ENCODE measurements at regions of chr7 and their contacts with region 1.

Region 1: DNA sequence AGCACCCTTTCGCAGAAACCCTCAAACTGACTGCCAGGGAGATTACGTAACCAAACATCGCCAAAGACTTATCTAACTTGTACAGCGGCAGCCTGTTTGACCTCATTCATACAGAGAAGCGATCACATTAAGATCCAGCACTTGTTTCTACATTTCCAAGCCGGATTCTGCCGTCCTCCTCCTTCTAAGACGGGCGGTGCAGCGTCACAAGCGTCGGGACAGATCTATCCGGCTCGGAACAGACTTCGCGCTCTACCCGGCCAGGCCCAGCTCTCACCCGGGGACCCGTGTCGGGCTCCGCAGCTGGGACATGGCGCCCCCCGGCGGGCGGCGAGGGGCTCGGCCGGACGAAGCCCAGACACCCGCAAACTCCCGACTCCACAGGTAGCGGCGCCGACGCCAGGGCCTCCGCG is 373 bp downstream of the H2AZ2 start:
- DNase-seq: peak; percentile 76 to 94
- H3K4me3 ChIP-seq: peak overlapping the region; percentile 69
- H3K27ac ChIP-seq: peak overlapping the region; percentile 51
- H3K4me1 ChIP-seq: peaks cover 27% of the 10 kb centered on the region
- H3K27me3 ChIP-seq: no peaks in the 10 kb centered on the region
- CTCF ChIP-seq: peak; percentile 96

Region 2: DNA sequence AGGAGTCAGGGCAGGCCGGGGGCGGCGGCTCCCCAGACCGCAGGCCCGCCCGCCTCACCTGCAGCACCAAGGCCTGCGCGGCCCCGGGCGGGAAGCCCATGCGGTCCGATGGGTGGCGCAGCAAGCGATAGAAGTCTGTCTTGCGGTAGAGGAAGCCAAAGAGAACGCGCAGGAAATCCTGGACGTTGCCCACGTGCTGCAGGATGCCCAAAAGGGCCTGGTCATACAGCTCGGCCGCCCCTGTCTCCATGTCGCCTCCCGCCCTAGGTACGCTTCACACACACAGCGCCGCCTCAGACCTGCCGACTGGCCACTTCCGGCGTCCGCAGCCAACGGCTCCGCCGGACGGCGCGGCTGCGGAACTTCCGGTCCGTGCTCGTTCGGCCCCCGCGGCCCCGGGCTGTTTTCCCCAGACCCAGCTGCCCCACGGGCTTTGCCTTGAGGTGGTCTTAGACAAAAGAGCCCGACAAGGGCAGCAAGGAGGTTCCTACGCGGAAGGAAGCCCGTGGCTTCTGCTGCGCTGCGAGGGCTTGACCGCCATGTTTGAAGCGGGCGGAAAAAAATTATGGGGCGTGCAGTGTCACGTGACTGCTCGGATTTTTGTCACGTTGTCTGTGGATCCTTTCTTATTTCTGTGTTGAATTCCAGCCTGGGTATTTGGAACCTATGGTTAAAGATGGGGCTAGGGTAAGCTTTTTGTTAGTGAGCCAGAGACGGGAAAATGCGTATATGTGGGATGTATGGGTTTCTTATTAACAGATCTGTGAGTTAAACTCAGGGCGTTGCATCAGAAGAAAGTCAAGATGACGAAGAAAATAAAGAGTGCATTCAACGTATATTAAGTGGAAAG is 356.9 kb before region 1 on chr7 and contains the start of gene NUDCD3:
- CTCF ChIA-PET with region 1: no interaction called
- POLR2A ChIA-PET with region 1: interaction called, 14 read pairs
- intact Hi-C with region 1: loop called (anchors 1 kb)
- DNase-seq: peak; percentile 74 to 89
- H3K4me3 ChIP-seq: peak within 1 kb of the TSS; percentile 86
- H3K27ac ChIP-seq: peak within 1 kb of the TSS; percentile 92
- H3K4me1 ChIP-seq: peaks cover 27% of the 10 kb centered on the region
- H3K27me3 ChIP-seq: no peaks in the 10 kb centered on the region
- CTCF ChIP-seq: peak; percentile 38; the same call in 1 of the 2 replicates
- total RNA-seq, gene NUDCD3: 149 and 158 TPM in 2 replicates

Region 3: DNA sequence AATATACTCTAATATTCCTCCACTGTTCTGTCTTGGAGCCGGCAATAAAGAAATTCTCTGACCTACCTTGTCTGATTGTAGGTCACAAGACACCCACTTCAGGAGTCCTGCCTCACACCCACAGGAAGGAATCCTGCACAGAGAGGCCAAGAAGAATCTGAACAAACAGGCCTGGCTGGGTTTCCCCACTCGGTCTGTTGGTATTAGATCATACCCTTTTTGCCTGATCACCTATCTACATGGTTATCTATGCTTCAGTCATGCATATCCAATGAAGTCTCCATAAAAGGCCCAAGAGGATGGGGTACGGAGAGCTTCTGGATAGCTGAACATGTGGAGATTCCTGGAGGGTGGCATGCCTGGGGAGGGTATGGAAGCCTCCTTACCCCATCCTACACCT is 228.8 kb before region 1 on chr7:
- CTCF ChIA-PET with region 1: no interaction called
- POLR2A ChIA-PET with region 1: interaction called, 10 read pairs
- intact Hi-C with region 1: no loop called
- DNase-seq: peak; percentile 93 to 99
- H3K4me3 ChIP-seq: peak overlapping the region; percentile 52; the same call in 1 of the 2 replicates
- H3K27ac ChIP-seq: peak overlapping the region; percentile 87
- H3K4me1 ChIP-seq: peaks cover 86% of the 10 kb centered on the region
- H3K27me3 ChIP-seq: no peaks in the 10 kb centered on the region
- CTCF ChIP-seq: no peak

Region 4: GRCh38 chr7:44748045-44748947 is 99.2 kb before region 1 on chr7 and contains the start of gene ZMIZ2:
- CTCF ChIA-PET with region 1: no interaction called
- POLR2A ChIA-PET with region 1: no interaction called
- intact Hi-C with region 1: loop called (anchors 5 kb)
- DNase-seq: peak; percentile 77 to 97
- H3K4me3 ChIP-seq: peak within 1 kb of the TSS; percentile 92
- H3K27ac ChIP-seq: peak within 1 kb of the TSS; percentile 57
- H3K4me1 ChIP-seq: peaks cover 37% of the 10 kb centered on the region
- H3K27me3 ChIP-seq: no peaks in the 10 kb centered on the region
- CTCF ChIP-seq: no peak
- total RNA-seq, gene ZMIZ2: 97.5 and 142 TPM in 2 replicates

Region 5: GRCh38 chr7:44885394-44886317 is 38.1 kb after region 1 on chr7 and contains the start of gene PURB:
- CTCF ChIA-PET with region 1: interaction called, 13 read pairs
- POLR2A ChIA-PET with region 1: interaction called, 14 read pairs
- intact Hi-C with region 1: no loop called
- DNase-seq: peak; percentile 97 to 98
- H3K4me3 ChIP-seq: peak within 1 kb of the TSS; percentile 77
- H3K27ac ChIP-seq: peak within 1 kb of the TSS; percentile 96
- H3K4me1 ChIP-seq: peaks cover 44% of the 10 kb centered on the region
- H3K27me3 ChIP-seq: no peaks in the 10 kb centered on the region
- CTCF ChIP-seq: no peak
- total RNA-seq, gene PURB: 33.1 and 38.2 TPM in 2 replicates

Region 6: DNA sequence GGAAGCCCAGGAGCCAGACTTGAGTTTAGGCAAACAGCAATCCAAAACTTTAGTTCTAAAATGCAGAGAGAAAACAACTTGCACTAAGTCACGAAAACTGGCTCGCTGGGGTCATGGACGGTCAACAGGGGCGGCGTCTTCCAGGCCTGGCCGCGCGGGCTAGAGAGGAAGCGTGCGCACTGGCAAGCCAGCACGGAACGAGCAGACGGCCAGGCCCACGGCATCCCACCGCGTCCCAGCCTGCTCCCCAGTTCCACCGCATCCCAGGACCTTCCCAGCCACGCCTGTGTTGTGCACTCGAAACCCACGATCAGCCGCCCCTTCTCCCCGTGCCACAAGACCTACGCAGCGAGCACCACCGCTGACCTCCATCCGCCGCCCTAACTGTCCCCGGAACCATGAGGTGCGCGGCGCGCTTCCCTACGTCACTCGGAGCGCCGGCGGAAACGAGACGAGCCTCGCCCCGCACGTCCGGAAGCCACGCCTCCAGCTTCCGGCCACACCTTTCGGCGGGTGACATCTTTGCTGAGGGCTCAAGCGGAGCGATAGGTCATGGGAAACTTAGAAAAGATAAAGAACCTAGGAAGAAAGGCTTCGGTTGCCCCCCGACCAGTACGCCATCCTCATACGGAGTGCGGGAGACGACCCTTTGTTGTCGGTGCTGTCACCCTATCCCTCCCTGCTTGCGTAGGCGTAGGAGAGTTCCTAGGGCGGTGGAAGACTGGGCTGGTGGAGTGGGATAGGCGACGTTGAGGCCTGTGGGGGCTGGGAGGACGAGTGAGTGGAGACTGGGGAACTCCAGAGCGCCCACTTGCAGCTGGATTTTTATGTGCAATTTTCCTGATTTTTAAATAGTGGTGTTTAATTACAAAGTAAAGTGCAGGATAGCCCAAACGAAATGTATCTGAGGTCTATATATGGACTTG is 264.0 kb after region 1 on chr7 and contains the start of gene TBRG4:
- CTCF ChIA-PET with region 1: no interaction called
- POLR2A ChIA-PET with region 1: no interaction called
- intact Hi-C with region 1: loop called (anchors 2 kb)
- DNase-seq: peak; percentile 92 to 95
- H3K4me3 ChIP-seq: peak within 1 kb of the TSS; percentile 68
- H3K27ac ChIP-seq: peak within 1 kb of the TSS; percentile 82
- H3K4me1 ChIP-seq: peaks cover 25% of the 10 kb centered on the region
- H3K27me3 ChIP-seq: peaks cover 13% of the 10 kb centered on the region
- CTCF ChIP-seq: peak; percentile 67; the same call in 1 of the 2 replicates
- total RNA-seq, gene TBRG4: 117 and 120 TPM in 2 replicates